ENCODE measurements at regions of chrX and their contacts with region 1.

Region 1: DNA sequence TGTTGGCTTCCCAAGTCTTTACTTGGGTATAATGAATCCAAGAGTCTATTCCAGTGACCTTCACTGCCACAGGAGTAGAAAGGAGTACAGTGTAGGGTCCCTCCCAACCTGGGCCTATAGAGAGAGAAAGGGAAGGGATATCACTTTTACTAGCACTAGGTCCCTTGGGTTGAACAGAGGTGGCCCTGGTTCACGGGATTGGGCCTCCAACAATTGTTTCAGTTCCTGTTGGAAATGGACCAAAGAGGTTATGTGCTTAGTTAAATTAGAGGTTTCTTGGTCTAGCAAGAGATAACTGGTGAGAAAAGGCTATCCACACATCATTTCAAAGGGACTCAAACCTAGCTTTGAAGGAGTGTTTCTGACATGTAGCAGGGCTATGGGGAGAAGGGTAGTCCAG is 57.1 kb upstream of the MED14 start:
- DNase-seq: no peak
- H3K4me3 ChIP-seq: no peak overlapping the region
- H3K27ac ChIP-seq: no peak overlapping the region
- H3K4me1 ChIP-seq: peaks cover 0 to 5% (median 2%) of the 10 kb centered on the region in 4 donors
- H3K27me3 ChIP-seq: no peaks in the 10 kb centered on the region
- CTCF ChIP-seq: no peak
- EP300 ChIP-seq: no peak
- POLR2A ChIP-seq: no peak

Region 2: GRCh38 chrX:40735325-40736169 is 56.9 kb before region 1 on chrX and contains the start of gene MED14:
- intact Hi-C with region 1: loop called (anchors 5 kb)
- DNase-seq: peak; percentile 92
- H3K4me3 ChIP-seq: peak within 1 kb of the TSS; percentile 70 to 87 (median 78)
- H3K27ac ChIP-seq: peak within 1 kb of the TSS; percentile 92 to 98 (median 94)
- H3K4me1 ChIP-seq: peaks cover 0 to 22% (median 18%) of the 10 kb centered on the region in 4 donors
- H3K27me3 ChIP-seq: no peaks in the 10 kb centered on the region
- CTCF ChIP-seq: peak; percentile 7 to 31 (median 28)
- EP300 ChIP-seq: no peak
- POLR2A ChIP-seq: peak in 1 of 2 donors; percentile 60
- total RNA-seq, gene MED14: 23.9 to 51.6 (median 28.3) TPM

Measured in sigmoid colon (tissue), 7 donors.